WTC11 (cell line): ENCODE measurements at regions of chr12 and their contacts with region 1.

Region 1: GRCh38 chr12:7959701-7960121 is 23.7 kb upstream of the SLC2A3 start:
- DNase-seq: peak; percentile 70
- ATAC-seq: peak; percentile 86
- H3K4me3 Mint-ChIP-seq: peak overlapping the region; percentile 75
- H3K27ac Mint-ChIP-seq: peak overlapping the region; percentile 97
- H3K4me1 Mint-ChIP-seq: peaks cover 48% of the 10 kb centered on the region
- H3K27me3 Mint-ChIP-seq: no peaks in the 10 kb centered on the region
- CTCF ChIP-seq: no peak

Region 2: DNA sequence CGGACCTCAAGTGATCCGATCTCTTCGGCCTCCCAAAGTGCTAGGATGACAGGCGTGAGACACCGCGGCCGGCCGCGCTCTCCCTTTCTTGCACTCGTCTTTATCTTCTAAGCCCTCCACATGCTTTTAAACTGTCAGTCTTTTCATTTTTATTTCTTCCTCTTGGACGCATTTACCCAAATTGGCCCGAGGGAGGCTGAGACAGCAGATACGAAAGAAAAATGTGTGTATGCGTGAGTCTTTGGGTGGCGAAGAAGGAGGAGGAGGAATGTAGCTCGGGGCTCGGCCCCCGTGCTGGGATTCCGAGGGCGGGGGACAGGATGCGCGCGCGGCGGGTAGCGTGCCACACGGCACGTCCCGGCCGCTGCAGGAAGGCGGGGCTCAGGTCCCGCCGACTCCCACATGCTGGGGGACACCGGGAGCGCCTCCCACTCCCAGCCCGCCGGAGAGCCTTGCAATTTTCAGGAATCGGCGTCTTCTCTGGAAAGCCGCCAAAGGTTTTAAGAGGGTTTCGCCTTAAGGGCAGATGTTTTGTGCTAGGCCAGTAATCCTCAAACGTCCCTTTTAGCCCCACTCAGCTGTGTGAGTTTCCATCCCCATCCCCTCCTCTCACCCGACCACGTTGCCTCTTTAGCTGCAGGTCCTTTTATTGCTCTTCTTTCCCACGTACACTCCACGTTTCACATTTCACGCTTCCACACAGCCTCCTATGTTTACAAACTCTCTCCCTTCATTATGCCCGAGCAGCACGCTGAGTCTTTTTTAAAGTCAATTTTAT is 11.0 kb after region 1 on chr12:
- CTCF ChIA-PET with region 1: interaction called, 12 read pairs
- POLR2A ChIA-PET with region 1: interaction called, 16 read pairs
- DNase-seq: peak; percentile 96
- ATAC-seq: peak; percentile 96
- H3K4me3 Mint-ChIP-seq: peak overlapping the region; percentile 71
- H3K27ac Mint-ChIP-seq: peak overlapping the region; percentile 100
- H3K4me1 Mint-ChIP-seq: peaks cover 65% of the 10 kb centered on the region
- H3K27me3 Mint-ChIP-seq: no peaks in the 10 kb centered on the region
- CTCF ChIP-seq: no peak

Region 3: DNA sequence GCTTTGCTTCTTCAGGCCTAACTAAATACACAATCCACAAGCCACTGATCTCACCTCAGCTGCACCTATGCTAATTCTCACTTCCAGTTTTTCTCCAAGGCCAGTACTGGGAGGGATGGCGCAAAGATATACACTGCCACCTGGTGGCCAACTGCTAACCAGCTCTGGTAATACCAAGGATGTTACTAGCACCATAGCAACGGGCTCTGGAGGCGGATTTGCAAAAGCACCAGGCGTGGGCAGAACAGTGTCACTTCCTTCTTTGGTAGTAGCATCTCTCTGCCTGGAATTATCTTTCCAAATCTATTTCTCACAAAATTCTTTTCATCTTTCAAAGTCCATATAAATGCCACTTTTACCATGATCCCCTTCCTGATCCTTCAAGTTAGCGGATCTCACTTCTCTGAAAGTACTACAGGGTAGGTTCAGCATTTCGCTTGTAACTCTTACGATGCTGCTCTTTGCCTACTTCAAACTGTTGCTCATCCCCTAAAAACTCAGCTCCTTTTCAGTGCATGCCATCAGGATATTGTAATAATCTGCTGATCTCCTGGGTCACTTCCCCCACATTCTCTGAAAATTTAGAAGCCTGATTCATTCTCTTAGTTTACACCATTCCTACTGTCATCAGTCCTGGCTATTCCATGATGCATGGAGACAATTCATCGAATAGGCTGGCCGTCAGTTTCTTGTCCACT is 35.7 kb after region 1 on chr12:
- CTCF ChIA-PET with region 1: interaction called, 11 read pairs
- POLR2A ChIA-PET with region 1: interaction called, 3 read pairs
- DNase-seq: peak; percentile 76
- ATAC-seq: peak; percentile 95
- H3K4me3 Mint-ChIP-seq: no peak overlapping the region
- H3K27ac Mint-ChIP-seq: no peak overlapping the region
- H3K4me1 Mint-ChIP-seq: peaks cover 12% of the 10 kb centered on the region
- H3K27me3 Mint-ChIP-seq: no peaks in the 10 kb centered on the region
- CTCF ChIP-seq: peak; percentile 87